Vagina (tissue), 2 donors: ENCODE measurements at regions of chr3 and their contacts with region 1.

Region 1: DNA sequence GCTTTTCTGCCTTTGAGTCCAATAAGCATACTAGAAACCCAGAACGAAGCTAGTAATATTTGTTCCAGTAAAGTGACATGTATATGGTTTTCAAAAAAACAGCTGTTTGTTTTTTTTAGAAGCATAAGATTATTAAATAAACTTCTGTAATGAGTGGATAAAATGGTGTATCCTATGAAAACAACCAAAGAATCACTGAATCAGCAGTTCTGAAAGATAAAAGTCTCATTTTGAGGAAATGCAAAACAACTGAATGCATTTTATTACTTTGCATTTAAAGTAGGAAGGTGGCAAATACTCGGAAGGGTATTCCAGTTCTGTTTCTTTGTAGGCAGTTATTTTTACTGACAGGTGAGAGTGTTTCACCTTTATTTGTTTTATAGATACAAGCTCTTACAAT is 107.0 kb downstream of the CNTN4 start:
- DNase-seq: no peak
- H3K4me3 ChIP-seq: no peak overlapping the region
- H3K27ac ChIP-seq: no peak overlapping the region
- H3K4me1 ChIP-seq: no peaks in the 10 kb centered on the region
- H3K27me3 ChIP-seq: no peaks in the 10 kb centered on the region
- CTCF ChIP-seq: no peak
- POLR2A ChIP-seq: no peak

Region 2: GRCh38 chr3:2311022-2311421 is 105.3 kb after region 1 on chr3:
- intact Hi-C with region 1: no loop called
- DNase-seq: no peak
- H3K4me3 ChIP-seq: no peak overlapping the region
- H3K27ac ChIP-seq: no peak overlapping the region
- H3K4me1 ChIP-seq: no peaks in the 10 kb centered on the region
- H3K27me3 ChIP-seq: no peaks in the 10 kb centered on the region
- CTCF ChIP-seq: no peak
- POLR2A ChIP-seq: no peak

Region 3: DNA sequence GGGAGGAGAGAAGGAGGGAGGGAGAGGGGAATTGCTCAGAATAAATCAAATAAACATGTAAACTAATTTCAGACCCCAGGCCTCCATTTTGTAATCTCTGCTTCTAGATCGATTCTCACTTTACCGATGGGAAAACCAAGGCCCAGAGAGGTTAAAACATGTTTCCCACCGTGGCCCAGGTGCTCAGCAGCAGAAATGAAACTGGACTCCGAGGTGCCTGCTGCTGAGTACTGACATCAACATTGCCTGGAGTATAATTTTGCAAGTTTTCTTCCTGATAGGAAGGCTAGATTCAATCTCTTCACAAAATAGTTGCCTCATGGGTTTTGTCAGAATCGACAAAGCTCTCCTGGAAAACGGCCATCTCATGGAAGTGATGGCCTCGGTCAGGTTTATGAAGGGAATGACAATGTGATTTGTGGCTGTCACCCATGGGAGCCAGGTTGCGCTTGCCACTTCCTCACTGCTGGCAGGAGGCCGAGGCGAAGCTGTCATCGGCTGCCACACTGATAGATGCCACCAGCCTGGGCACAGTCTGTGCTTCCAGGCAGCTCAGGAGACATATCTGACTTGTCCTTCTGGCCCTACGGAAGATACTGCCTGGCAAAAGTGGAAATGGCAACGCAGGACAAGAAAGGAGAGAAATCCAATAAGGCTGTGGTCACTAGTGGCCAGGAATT is 1460.4 kb after region 1 on chr3:
- intact Hi-C with region 1: loop called (anchors 5 kb)
- DNase-seq: no peak
- H3K4me3 ChIP-seq: no peak overlapping the region
- H3K27ac ChIP-seq: no peak overlapping the region
- H3K4me1 ChIP-seq: no peaks in the 10 kb centered on the region
- H3K27me3 ChIP-seq: no peaks in the 10 kb centered on the region
- CTCF ChIP-seq: no peak
- POLR2A ChIP-seq: no peak